Activated T-helper 1 cell treated with anti-CD3 and anti-CD28 coated beads, Interleukin-12 subunit alpha, Interleukin-12 subunit beta, Interleukin-2, Interleukin-4 antibody, amounts not matched to agents 30 ng/mL and 10 ng/mL and 1 ng/mL, durations not matched to agents 14 hours and 24 hours and 36 hours (primary cell): ENCODE measurements at regions of chr11 and their contacts with region 1.

Region 1: DNA sequence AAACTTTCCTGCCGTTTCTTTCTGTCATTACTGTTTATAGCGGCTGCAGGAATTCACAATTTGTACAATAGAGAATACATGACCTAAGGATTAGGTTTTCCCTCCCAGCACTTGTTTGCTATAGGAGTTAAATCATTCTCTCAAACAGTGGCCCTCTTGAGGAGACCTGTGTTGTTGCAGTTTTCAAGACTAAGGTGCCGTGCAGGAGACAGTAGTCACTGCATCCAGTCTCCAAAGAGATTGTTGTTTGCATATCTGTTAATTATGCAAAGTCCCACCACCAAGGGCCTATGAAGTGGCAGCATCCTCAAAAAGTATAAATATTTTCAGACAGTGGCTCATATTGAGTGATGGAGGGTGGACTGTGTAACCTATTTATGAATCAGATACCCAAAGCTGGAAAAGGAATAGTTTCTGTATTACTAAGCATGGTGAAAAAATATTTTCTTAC is 2.3 kb downstream of the PRSS23 start:
- DNase-seq: no peak
- H3K4me3 Mint-ChIP-seq: peak overlapping the region; percentile 92
- H3K27ac Mint-ChIP-seq: peak overlapping the region; percentile 69
- H3K4me1 Mint-ChIP-seq: peaks cover 77% of the 10 kb centered on the region
- H3K27me3 Mint-ChIP-seq: peaks cover 24% of the 10 kb centered on the region

Region 2: GRCh38 chr11:85627998-85628770 is 1174.4 kb before region 1 on chr11 and contains the start of gene TMEM126B:
- intact Hi-C with region 1: loop called (anchors 1 kb)
- DNase-seq: peak; percentile 96
- H3K4me3 Mint-ChIP-seq: peak within 1 kb of the TSS; percentile 97
- H3K27ac Mint-ChIP-seq: peak within 1 kb of the TSS; percentile 94
- H3K4me1 Mint-ChIP-seq: peaks cover 52% of the 10 kb centered on the region
- H3K27me3 Mint-ChIP-seq: peaks cover 6% of the 10 kb centered on the region
- total RNA-seq, gene TMEM126B: 52.5 and 57.2 TPM in 2 replicates

Region 3: DNA sequence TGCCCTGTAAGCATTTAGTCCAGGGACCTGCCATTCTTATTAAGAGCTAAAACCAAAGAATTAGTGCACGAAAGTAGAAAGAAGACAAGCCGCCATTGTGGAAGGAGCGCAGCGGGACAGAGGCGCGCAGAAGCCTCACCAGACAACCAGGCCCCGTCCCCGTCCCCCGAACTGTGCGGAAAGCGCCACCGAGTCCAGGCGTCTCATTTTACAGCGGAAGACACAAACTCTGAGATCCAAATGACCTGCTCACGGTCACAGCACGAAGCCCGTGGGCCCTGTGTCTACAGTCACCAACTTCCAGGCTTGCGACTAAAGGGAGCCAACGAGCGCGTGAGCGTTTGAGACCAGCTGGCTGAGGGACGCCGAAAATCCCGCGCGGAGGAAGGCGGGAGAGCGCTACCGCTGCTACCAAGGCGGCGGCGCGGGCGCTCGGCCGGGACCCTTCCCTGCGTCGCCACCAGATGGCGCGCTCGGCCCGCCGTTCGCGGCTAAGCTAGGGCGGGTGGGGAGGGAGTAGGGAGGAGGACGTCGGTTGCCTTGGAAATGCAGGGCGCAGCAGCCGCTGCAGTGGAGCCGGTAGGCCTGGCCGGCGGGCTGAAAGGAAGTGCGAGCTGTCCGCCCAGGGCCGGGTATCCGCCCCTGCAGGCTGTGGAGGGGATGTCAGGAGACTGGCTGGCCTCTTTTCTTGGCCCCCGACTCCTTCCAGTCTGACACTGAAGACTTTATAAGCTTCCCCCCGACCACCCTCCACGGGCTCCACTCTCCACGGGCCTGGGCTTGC is 947.9 kb before region 1 on chr11:
- intact Hi-C with region 1: loop called (anchors 5 kb)
- DNase-seq: peak; percentile 88
- H3K4me3 Mint-ChIP-seq: peak overlapping the region; percentile 84
- H3K27ac Mint-ChIP-seq: peak overlapping the region; percentile 83
- H3K4me1 Mint-ChIP-seq: peaks cover 18% of the 10 kb centered on the region
- H3K27me3 Mint-ChIP-seq: peaks cover 5% of the 10 kb centered on the region

Region 4: DNA sequence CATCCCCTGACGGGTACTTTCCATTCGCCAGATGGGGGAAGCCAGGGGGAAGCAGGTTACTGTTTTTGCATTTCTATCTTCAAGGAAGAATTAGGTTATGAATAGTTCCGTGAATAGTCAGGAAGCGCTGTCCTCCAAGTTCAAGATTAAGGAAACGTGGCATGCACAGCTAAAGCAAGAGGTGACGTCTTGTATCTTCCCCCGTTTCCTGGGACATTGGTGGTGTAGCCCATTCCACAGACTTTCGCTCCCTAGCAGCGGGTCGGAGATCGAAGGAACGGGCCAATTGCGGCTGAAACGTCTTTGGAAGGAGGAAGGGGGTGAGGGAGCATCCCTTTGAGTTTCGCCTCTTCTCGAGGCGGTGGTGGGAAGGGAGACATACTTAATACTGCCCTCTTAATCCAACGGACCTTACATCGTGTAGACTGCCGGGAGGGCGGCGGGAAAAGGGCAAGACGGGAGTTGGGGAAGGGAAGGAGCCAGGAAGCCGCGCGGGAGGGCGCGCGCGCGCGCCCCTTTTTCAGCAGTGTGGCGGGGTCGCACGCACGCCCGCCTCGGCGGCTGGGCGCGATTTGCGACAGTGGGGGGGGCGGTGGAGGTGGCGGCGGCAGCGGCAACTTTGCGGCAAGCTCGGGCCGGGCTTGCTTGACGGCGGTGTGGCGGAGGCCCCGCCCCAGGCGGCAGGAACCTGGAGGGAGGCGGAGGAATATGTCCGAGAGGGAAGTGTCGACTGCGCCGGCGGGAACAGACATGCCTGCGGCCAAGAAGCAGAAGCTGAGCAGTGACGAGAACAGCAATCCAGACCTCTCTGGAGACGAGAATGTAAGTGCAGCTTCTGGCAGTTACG is 557.9 kb before region 1 on chr11 and contains the start of gene EED:
- intact Hi-C with region 1: loop called (anchors 10 kb)
- DNase-seq: peak; percentile 93
- H3K4me3 Mint-ChIP-seq: no peak within 1 kb of the TSS
- H3K27ac Mint-ChIP-seq: no peak within 1 kb of the TSS
- H3K4me1 Mint-ChIP-seq: peaks cover 43% of the 10 kb centered on the region
- H3K27me3 Mint-ChIP-seq: no peaks in the 10 kb centered on the region
- total RNA-seq, gene EED: 279 and 294 TPM in 2 replicates

Region 5: DNA sequence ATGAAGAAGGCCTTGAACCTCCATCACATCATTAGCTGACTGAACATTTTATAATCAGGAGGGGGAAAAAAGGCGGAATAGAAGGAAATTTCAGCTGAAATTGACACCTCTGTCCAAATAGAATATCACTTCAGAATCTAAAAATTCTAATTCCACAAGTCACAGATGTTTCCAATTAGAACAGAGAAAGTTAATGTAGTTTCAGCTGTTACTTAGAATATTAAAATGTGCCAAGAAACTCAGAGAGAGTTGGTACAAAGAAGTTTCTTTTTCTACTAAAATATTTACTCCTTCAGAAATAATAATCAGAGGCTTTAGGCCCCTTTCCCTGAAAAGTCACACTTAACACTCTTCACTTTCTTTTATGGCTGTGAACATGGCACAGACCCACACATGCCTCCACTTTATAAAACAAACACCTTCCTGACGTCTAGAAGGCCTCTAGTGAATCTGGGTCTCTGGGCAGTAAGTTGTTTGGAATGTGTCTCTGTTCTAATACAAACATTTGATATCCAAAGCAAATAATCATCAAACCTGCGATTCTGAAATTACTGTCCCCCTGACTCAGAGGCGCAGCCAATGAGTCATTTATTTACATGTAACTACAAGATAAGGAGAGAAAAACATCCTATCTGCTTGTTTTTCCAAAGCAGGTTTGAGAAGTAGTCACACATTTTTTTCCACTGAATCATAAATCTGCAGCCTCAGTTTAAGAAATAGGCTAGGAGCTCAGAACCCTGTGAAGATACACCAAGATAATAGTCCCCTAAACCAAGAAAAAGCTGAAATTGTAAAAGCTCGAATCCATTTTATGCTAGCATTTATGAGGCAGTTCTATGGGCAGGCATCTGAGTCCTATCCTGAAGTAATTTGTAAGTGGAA is 278.6 kb before region 1 on chr11:
- intact Hi-C with region 1: loop called (anchors 1 kb)
- DNase-seq: no peak
- H3K4me3 Mint-ChIP-seq: peak overlapping the region; percentile 56
- H3K27ac Mint-ChIP-seq: peak overlapping the region; percentile 90
- H3K4me1 Mint-ChIP-seq: peaks cover 36% of the 10 kb centered on the region
- H3K27me3 Mint-ChIP-seq: peaks cover 2% of the 10 kb centered on the region

Region 6: DNA sequence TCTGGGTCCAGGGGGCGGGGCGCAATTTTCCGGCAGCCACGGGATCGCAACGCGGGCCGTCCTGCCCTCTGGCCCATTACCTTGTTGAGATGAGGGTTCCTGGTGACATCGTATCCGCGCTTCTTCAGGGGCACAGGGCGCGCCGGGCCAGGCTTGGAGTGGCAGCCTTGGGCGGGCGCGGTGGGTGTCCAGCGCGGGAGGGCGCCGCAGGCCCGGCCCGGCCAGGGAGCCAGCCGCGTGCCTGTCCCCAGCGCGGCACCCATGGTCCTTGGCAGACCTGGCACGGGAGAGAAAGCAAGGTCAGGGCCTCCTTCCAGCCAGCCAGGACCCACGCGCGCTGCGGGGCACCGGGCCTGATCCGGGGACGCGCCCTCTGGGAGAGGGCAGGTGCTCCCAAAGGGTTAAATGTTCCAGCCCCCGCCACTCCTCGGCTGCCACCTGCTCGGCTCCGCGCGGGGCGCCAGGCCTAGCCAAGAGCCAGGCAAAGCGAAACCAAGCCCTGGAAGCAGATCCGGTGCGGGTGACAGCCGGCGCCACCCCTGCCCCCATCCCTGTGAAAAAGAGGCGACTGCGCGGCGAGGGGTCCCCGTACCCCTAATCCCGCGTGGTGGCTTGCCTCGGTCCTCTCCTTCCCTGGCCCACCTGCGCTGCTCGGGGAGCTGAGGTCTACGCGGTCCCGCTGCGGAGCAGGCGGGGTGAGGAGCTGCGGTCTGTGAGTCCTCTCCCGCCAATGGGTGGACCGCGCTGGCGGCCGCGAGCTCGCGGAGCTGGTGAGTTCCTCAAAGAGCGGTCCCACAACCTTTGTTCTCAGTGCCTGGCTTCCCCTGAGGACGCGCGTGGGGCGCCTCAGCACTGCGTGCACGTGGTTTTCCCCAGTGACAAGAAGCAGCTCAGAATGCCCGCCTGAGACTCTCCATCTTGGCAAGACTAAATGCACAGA is 130.7 kb before region 1 on chr11 and contains the start of gene ME3:
- intact Hi-C with region 1: loop called (anchors 1 kb)
- DNase-seq: peak; percentile 47
- H3K4me3 Mint-ChIP-seq: peak within 1 kb of the TSS; percentile 83
- H3K27ac Mint-ChIP-seq: peak within 1 kb of the TSS; percentile 79
- H3K4me1 Mint-ChIP-seq: peaks cover 18% of the 10 kb centered on the region
- H3K27me3 Mint-ChIP-seq: peaks cover 31% of the 10 kb centered on the region
- total RNA-seq, gene ME3: 12.8 and 13.1 TPM in 2 replicates

Region 7: GRCh38 chr11:86769219-86769618 is 33.4 kb before region 1 on chr11:
- intact Hi-C with region 1: no loop called
- DNase-seq: no peak
- H3K4me3 Mint-ChIP-seq: no peak overlapping the region
- H3K27ac Mint-ChIP-seq: no peak overlapping the region
- H3K4me1 Mint-ChIP-seq: no peaks in the 10 kb centered on the region
- H3K27me3 Mint-ChIP-seq: peaks cover 14% of the 10 kb centered on the region

Region 8: DNA sequence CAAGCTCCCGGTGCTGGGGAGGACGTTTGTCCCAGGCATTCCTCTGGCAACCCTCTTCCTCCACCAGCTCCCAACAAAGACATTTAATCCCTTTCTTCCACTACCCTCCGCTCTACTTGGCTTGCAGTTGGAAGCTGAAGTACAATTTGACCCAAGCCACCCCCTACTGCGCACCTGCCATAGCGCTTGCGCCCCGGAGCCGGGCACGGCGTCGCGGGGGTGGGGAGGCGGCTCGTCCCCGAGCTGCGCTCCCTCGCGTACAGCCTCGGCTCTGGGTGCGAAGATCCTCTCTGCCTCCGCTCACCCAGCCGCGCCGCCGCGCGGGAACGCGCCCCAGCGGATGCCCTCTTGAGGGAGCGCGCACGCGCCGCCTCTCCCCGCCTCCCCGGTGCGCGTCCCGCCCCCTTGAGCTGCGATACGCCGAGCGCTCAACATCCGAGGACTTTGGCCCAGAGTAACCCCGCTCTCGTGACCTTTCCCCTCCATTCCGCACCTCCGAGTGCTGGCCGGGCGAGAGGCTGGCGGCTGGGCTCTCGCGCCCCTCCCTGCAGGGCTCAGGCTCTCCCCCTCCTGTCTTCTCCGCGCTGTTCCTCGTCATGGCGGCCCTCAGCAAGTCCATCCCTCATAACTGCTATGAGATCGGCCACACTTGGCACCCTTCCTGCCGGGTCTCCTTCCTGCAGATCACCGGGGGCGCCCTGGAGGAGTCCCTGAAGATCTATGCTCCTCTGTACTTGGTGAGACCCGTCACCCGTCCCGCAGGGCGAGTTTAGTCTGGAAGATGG is 235.0 kb after region 1 on chr11 and contains the start of gene TMEM135:
- intact Hi-C with region 1: loop called (anchors 5 kb)
- DNase-seq: peak; percentile 93
- H3K4me3 Mint-ChIP-seq: peak within 1 kb of the TSS; percentile 98
- H3K27ac Mint-ChIP-seq: peak within 1 kb of the TSS; percentile 89
- H3K4me1 Mint-ChIP-seq: peaks cover 49% of the 10 kb centered on the region
- H3K27me3 Mint-ChIP-seq: peaks cover 17% of the 10 kb centered on the region
- total RNA-seq, gene TMEM135: 27.9 and 28.8 TPM in 2 replicates

Region 9: GRCh38 chr11:87398931-87399330 is 596.3 kb after region 1 on chr11:
- intact Hi-C with region 1: no loop called
- DNase-seq: no peak
- H3K4me3 Mint-ChIP-seq: no peak overlapping the region
- H3K27ac Mint-ChIP-seq: no peak overlapping the region
- H3K4me1 Mint-ChIP-seq: no peaks in the 10 kb centered on the region
- H3K27me3 Mint-ChIP-seq: peaks cover 5% of the 10 kb centered on the region